Gastrocnemius medialis (tissue), 4 donors: ENCODE measurements at regions of chrX and their contacts with region 1.

Region 1: GRCh38 chrX:49100704-49101628 is 21.3 kb upstream of the WDR45 start:
- DNase-seq: peak; percentile 78 to 88
- ATAC-seq: peak; percentile 98
- H3K4me3 ChIP-seq: peak overlapping the region; percentile 62 to 78 (median 68)
- H3K27ac ChIP-seq: peak overlapping the region; percentile 70 to 89 (median 86)
- H3K4me1 ChIP-seq: no peaks in the 10 kb centered on the region
- H3K27me3 ChIP-seq: no peaks in the 10 kb centered on the region
- CTCF ChIP-seq: no peak
- POLR2A ChIP-seq: peak; percentile 54 to 60

Region 2: DNA sequence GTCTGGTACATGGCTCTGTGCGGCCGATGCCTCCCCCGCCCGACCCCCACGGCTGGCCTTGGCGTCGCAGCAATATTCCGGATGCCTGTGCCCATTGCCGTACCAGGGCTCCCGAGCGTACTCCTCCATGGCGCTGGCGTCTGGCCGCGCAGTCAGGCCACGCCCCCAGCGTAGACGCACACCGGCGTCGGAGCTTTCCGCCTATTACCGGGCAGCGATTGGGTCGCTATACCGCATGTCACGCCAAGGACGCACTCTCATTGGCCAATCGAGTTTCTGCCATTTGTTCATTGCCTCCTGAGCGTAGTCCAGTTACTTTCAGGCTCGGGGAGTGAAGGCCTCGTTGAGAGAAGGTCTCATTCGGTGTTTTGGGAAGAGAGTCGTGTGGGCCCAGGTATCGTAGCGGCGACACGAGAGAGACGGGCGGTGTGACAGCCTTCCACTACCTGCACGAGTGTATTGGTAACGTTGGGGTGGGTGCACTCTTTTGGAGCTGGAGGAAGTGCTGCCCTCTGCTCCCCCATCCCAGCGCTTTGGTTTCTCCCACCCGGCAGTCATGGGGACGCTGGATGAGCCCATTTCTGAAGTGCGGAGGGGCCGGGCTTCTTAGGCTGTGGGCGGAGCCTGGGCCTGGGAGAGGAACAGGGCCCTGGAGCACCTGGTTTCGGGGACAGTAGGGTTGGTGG is 203.2 kb before region 1 on chrX and contains the starts of genes PQBP1 and TIMM17B:
- in situ Hi-C with region 1: no loop called
- intact Hi-C with region 1: loop called (anchors 10 kb)
- DNase-seq: peak; percentile 87 to 92
- ATAC-seq: peak; percentile 95 to 97
- H3K4me3 ChIP-seq: peak within 1 kb of the TSS; percentile 62 to 79 (median 72)
- H3K27ac ChIP-seq: peak within 1 kb of the TSS; percentile 90 to 98 (median 95)
- H3K4me1 ChIP-seq: peaks cover 0 to 12% of the 10 kb centered on the region in 2 donors
- H3K27me3 ChIP-seq: no peaks in the 10 kb centered on the region
- CTCF ChIP-seq: no peak
- POLR2A ChIP-seq: peak; percentile 76 to 88
- total RNA-seq, gene PQBP1: 61.3 to 90.4 (median 67.8) TPM
- total RNA-seq, gene TIMM17B: 53.3 to 103 (median 68.5) TPM

Region 3: DNA sequence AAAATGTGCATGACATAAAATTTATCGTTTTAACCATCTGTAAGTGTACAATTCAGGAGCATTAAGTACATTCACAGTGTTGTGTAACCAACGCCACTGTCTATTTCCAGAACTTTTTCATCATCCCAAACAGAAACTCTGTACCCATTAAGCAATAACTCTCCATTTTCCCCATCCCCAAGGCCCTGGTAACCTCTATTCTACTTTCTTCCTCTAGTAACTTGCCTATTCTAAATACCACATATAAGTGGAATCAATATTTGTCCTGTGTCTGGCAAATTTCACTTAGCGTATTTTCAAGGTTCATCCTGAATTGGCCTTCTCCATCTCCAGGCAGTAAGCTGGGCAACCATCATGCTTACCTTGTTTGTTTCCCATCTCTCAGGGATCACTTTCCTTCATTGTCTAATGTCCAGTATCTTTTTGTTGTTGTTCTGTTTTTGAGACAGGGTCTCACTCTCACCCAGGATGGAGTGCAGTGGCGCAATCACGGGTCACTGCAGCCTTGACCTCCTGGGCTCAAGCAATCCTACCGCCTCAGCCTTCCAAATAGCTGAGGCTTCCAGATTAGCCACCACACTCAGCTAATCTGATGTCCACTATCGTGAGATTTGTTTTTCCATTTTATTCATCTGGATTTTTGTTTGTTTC is 81.2 kb before region 1 on chrX:
- in situ Hi-C with region 1: no loop called
- intact Hi-C with region 1: no loop called
- DNase-seq: no peak
- ATAC-seq: no peak
- H3K4me3 ChIP-seq: no peak overlapping the region
- H3K27ac ChIP-seq: no peak overlapping the region
- H3K4me1 ChIP-seq: no peaks in the 10 kb centered on the region
- H3K27me3 ChIP-seq: no peaks in the 10 kb centered on the region
- CTCF ChIP-seq: no peak
- POLR2A ChIP-seq: no peak

Region 4: DNA sequence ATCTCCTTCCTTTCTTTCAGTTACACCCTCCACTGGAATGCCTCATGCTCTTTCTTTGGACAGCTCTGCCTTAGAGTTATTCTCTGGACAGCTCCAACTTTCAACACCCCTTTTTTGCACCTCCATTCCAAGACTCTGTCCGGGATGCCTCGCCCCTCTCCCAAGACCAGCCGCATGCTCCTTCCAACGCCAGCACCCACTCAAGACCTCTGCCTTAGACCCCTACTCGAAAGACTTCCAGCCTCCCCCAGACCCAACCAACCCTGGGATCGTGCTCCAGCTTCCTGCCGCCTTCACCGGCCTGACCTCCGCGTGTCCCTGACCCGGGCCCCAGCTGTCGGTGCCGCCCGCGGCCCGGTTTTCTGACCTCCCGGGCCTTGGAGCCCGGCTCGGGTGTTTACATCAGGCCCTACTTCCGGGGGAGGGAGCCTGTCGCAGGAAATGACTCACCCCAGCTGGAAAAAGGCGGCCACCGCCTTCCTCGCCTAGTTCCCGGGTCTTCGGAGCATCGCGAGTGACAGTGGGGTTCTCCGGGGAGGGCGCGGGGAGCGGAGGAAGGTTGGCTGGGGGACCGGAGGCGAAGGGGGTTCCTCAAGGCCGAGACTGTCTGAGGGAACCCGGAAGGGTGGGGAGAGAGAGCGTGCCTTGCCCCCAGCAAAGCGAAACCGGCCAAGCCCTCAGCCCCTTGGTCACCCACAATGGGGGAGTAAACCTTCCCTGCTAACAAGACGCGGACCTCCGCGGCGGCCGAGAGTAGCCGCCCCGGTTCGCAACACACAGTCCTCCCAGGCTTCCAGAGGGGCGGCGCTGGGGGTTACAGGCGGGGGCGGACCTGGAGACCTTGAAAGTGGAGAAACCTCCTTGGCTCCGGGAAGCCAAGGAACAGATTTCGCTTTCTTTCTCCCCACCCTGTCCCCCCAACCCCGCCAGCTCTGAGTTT is 21.2 kb before region 1 on chrX and contains the start of gene WDR45:
- in situ Hi-C with region 1: no loop called
- intact Hi-C with region 1: loop called (anchors 2 kb)
- DNase-seq: peak; percentile 61 to 70
- ATAC-seq: peak; percentile 96 to 98
- H3K4me3 ChIP-seq: peak within 1 kb of the TSS; percentile 60 to 79 (median 72)
- H3K27ac ChIP-seq: peak within 1 kb of the TSS; percentile 88 to 97 (median 94)
- H3K4me1 ChIP-seq: peaks cover 0 to 6% of the 10 kb centered on the region in 2 donors
- H3K27me3 ChIP-seq: no peaks in the 10 kb centered on the region
- CTCF ChIP-seq: no peak
- POLR2A ChIP-seq: peak; percentile 68 to 78
- total RNA-seq, gene WDR45: 98.2 to 125 (median 105) TPM

Region 5: GRCh38 chrX:49120099-49120498 is 19.1 kb after region 1 on chrX:
- in situ Hi-C with region 1: no loop called
- intact Hi-C with region 1: loop called (anchors 2 kb)
- DNase-seq: no peak
- ATAC-seq: no peak
- H3K4me3 ChIP-seq: no peak overlapping the region
- H3K27ac ChIP-seq: no peak overlapping the region
- H3K4me1 ChIP-seq: peaks cover 2 to 6% of the 10 kb centered on the region in 2 donors
- H3K27me3 ChIP-seq: no peaks in the 10 kb centered on the region
- CTCF ChIP-seq: no peak
- POLR2A ChIP-seq: no peak